Naive thymus-derived CD4-positive, alpha-beta T cell (primary cell): ENCODE measurements at regions of chr7 and their contacts with region 1.

Region 1: GRCh38 chr7:44082541-44083207 is 344 bp upstream of the POLM start:
- DNase-seq: peak; percentile 88 to 99 (median 98)
- ATAC-seq: peak; percentile 96
- H3K4me3 ChIP-seq: peak overlapping the region; percentile 59
- H3K4me3 Mint-ChIP-seq: peak overlapping the region; percentile 79 to 91 (median 87)
- H3K27ac ChIP-seq: peak overlapping the region; percentile 92
- H3K27ac Mint-ChIP-seq: peak overlapping the region; percentile 44 to 95 (median 80)
- H3K4me1 ChIP-seq: peaks cover 15 to 16% of the 10 kb centered on the region in 2 donors
- H3K4me1 Mint-ChIP-seq: peaks cover 11 to 30% (median 18%) of the 10 kb centered on the region in 7 donors
- H3K27me3 ChIP-seq: no peaks in the 10 kb centered on the region
- H3K27me3 Mint-ChIP-seq: peaks cover 0 to 4% (median 0%) of the 10 kb centered on the region in 5 donors

Region 2: GRCh38 chr7:43925984-43926797 is 156.5 kb before region 1 on chr7 and contains the start of gene UBE2D4:
- CTCF ChIA-PET with region 1: no interaction called
- POLR2A ChIA-PET with region 1: no interaction called
- intact Hi-C with region 1: loop called in 1 of 2 experiments (anchors 1 kb)
- DNase-seq: peak; percentile 83 to 93 (median 91)
- ATAC-seq: peak; percentile 93
- H3K4me3 ChIP-seq: peak within 1 kb of the TSS; percentile 73
- H3K4me3 Mint-ChIP-seq: peak within 1 kb of the TSS; percentile 90 to 95 (median 93)
- H3K27ac ChIP-seq: peak within 1 kb of the TSS; percentile 94
- H3K27ac Mint-ChIP-seq: peak within 1 kb of the TSS; percentile 92 to 98 (median 96)
- H3K4me1 ChIP-seq: peaks cover 6 to 16% of the 10 kb centered on the region in 2 donors
- H3K4me1 Mint-ChIP-seq: peaks cover 20 to 58% (median 40%) of the 10 kb centered on the region in 7 donors
- H3K27me3 ChIP-seq: no peaks in the 10 kb centered on the region
- H3K27me3 Mint-ChIP-seq: no peaks in the 10 kb centered on the region
- total RNA-seq, gene UBE2D4: 6.3 to 13.9 (median 9.6) TPM

Region 3: DNA sequence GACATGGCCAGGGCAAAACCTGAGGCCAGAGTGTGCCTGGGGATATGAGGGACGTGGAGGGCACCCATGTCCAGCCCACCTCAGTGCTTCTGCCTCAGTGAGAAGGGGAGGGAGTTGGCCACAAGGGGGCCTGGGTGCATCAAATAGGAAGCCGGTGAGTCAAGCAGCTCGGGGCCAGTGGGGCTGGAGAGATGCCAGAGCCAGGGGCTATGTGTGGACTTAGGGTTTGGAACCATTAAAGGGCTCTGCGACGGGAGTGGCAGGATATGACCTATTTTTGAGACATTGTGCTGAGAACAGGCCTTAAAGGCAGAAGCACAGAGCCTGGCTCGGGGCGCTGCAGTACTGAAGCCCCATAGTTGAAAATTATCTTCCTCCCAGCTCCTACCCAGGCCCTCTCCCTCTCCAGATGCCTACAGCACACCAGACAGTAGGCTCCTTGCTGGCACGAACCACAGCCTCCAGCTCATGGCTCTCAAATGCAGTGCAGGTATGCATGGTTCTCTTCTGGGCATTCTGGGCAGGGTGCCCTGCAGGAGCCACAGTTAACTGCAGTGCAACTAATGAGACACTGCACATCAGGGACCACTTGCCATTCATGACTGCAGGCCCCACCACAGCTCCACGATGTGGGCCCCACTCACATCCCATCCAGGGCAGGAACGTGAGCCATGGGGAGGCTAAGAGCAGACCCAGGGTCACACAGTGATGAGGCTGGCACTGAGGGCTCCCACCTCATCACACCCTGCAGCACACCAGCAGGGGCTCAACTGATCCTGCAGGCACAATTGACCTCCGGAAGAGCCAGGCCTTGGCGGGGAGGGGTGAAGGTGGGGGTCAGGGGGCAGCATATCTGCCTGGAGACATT is 10.1 kb before region 1 on chr7:
- CTCF ChIA-PET with region 1: interaction called, 7 read pairs
- POLR2A ChIA-PET with region 1: interaction called, 53 read pairs
- intact Hi-C with region 1: loop called in 1 of 2 experiments (anchors 1 kb)
- DNase-seq: peak in 2 of 9 donors; percentile 26 to 36
- ATAC-seq: peak; percentile 46
- H3K4me3 ChIP-seq: no peak overlapping the region
- H3K4me3 Mint-ChIP-seq: no peak overlapping the region
- H3K27ac ChIP-seq: no peak overlapping the region
- H3K27ac Mint-ChIP-seq: peak overlapping the region in 7 of 9 donors; percentile 9 to 77 (median 60)
- H3K4me1 ChIP-seq: no peaks in the 10 kb centered on the region
- H3K4me1 Mint-ChIP-seq: peaks cover 2 to 34% (median 18%) of the 10 kb centered on the region in 7 donors
- H3K27me3 ChIP-seq: no peaks in the 10 kb centered on the region
- H3K27me3 Mint-ChIP-seq: no peaks in the 10 kb centered on the region

Region 4: GRCh38 chr7:44145969-44146911 is 63.6 kb after region 1 on chr7:
- CTCF ChIA-PET with region 1: no interaction called
- POLR2A ChIA-PET with region 1: no interaction called
- intact Hi-C with region 1: loop called (anchors 1 to 2 kb)
- DNase-seq: peak; percentile 21 to 81 (median 51)
- ATAC-seq: peak; percentile 80
- H3K4me3 ChIP-seq: peak overlapping the region; percentile 59
- H3K4me3 Mint-ChIP-seq: peak overlapping the region; percentile 68 to 89 (median 83)
- H3K27ac ChIP-seq: peak overlapping the region; percentile 52
- H3K27ac Mint-ChIP-seq: peak overlapping the region in 8 of 9 donors; percentile 46 to 91 (median 78)
- H3K4me1 ChIP-seq: no peaks in the 10 kb centered on the region
- H3K4me1 Mint-ChIP-seq: peaks cover 0 to 11% (median 7%) of the 10 kb centered on the region in 7 donors
- H3K27me3 ChIP-seq: no peaks in the 10 kb centered on the region
- H3K27me3 Mint-ChIP-seq: peaks cover 0 to 9% (median 0%) of the 10 kb centered on the region in 5 donors

Region 5: DNA sequence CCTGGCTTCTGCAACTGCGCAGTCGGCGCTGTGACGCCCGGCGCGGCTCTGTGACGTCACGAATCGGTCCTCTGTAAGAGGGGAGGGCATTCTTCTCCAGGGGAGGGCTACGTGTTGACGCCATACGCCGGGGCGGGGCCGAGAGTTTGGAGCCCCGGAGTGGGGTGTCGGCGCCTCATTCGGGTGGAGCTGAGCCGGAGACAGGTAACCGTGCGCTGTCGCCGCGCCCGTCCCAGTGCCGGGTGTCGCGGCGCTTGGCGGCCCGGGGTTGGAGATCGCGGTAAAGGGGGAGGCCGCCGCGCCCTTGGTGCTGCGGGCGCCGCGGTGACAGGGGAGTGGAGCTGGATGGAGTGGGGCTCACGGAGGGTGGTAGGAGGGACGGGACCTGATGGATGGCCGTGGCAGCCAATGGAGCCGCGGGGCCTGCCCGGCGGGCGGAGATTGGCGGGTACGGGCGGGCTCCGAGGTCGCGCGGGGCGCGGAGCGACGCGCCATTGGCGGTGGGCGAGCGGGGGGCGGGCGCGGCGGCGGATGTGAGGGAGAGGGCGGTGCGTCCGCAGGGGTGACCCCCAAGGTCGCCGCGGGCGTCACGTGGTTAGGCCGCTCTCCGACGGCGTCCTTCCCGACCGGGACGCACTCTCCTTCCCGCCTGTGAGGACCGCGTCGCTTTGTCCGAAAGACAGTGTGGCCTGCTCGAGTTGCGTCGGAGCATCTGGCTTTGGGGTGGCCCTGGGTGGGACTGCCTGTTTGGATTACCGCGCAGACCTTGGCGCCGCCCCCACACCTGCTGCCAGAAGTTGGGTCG is 524.0 kb after region 1 on chr7 and contains the start of gene OGDH:
- CTCF ChIA-PET with region 1: no interaction called
- POLR2A ChIA-PET with region 1: no interaction called
- intact Hi-C with region 1: loop called in 1 of 2 experiments (anchors 1 kb)
- DNase-seq: peak; percentile 99 to 100 (median 100)
- ATAC-seq: peak; percentile 95
- H3K4me3 ChIP-seq: peak within 1 kb of the TSS; percentile 71
- H3K4me3 Mint-ChIP-seq: peak within 1 kb of the TSS; percentile 81 to 99 (median 98)
- H3K27ac ChIP-seq: peak within 1 kb of the TSS; percentile 93
- H3K27ac Mint-ChIP-seq: peak within 1 kb of the TSS; percentile 93 to 100 (median 98)
- H3K4me1 ChIP-seq: peaks cover 13 to 17% of the 10 kb centered on the region in 2 donors
- H3K4me1 Mint-ChIP-seq: peaks cover 0 to 45% (median 37%) of the 10 kb centered on the region in 7 donors
- H3K27me3 ChIP-seq: no peaks in the 10 kb centered on the region
- H3K27me3 Mint-ChIP-seq: peaks cover 0 to 20% (median 0%) of the 10 kb centered on the region in 5 donors
- total RNA-seq, gene OGDH: 43.1 to 122 (median 66.3) TPM

Region 6: DNA sequence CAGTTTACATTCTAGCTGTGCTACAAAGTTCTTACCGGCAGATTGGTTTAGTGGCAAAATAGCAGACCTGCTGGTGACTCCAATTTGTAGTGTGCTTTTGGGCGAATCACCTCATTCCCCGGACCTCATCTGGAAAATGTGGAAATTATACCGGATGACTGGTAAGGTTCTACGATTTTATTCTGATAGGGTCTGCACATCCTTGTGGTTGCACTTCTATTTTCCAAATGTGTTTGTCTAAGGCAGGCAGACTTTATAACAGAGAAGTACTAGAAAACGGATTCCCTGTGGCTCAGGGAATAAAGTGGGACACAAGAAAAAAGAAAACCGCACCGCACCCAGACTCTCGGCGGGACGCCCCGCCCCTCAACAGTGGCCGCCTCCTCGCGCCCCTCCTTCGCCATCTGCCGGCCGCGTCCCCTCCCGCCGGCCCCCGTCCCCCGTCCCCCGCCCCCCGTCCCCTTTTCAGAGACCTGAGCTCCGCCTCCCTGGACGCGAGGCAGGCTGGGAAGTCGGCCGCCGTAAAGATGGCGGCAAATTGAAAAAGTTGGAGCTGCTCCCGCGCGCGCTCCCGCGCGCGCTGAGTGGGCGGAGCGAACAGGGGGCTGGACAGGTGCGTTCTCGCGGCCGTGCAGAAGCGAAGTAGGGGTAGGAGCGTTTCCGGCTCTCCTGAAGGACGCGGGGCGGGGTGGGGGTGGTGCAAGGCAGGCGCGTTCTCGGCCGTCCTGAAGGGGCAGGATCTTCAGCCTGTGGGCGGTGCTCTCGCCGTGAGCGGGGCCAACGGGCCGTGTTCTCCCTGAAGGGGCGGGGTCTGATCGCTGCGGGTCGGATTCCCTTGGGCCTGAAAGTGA is 916.8 kb after region 1 on chr7:
- CTCF ChIA-PET with region 1: no interaction called
- POLR2A ChIA-PET with region 1: no interaction called
- intact Hi-C with region 1: loop called in 1 of 2 experiments (anchors 5 kb)
- DNase-seq: peak; percentile 92 to 99 (median 98)
- ATAC-seq: peak; percentile 93
- H3K4me3 ChIP-seq: peak overlapping the region; percentile 83
- H3K4me3 Mint-ChIP-seq: peak overlapping the region; percentile 85 to 100 (median 96)
- H3K27ac ChIP-seq: peak overlapping the region; percentile 80
- H3K27ac Mint-ChIP-seq: peak overlapping the region; percentile 82 to 99 (median 96)
- H3K4me1 ChIP-seq: peaks cover 18 to 34% of the 10 kb centered on the region in 2 donors
- H3K4me1 Mint-ChIP-seq: peaks cover 19 to 59% (median 49%) of the 10 kb centered on the region in 7 donors
- H3K27me3 ChIP-seq: no peaks in the 10 kb centered on the region
- H3K27me3 Mint-ChIP-seq: no peaks in the 10 kb centered on the region